HepG2 (cell line): ENCODE measurements at regions of chr18 and their contacts with region 1.

Region 1: GRCh38 chr18:6835345-6835744 is 105.8 kb downstream of the ARHGAP28 start:
- DNase-seq: peak; percentile 6
- ATAC-seq: no peak
- H3K4me3 ChIP-seq: no peak overlapping the region
- H3K27ac ChIP-seq: no peak overlapping the region
- H3K4me1 ChIP-seq: no peaks in the 10 kb centered on the region
- H3K27me3 ChIP-seq: no peaks in the 10 kb centered on the region; a peak in 1 of 5 replicates
- CTCF ChIP-seq: no peak
- EP300 ChIP-seq: no peak
- POLR2A ChIP-seq: no peak
- RAD21 ChIP-seq: no peak

Region 2: DNA sequence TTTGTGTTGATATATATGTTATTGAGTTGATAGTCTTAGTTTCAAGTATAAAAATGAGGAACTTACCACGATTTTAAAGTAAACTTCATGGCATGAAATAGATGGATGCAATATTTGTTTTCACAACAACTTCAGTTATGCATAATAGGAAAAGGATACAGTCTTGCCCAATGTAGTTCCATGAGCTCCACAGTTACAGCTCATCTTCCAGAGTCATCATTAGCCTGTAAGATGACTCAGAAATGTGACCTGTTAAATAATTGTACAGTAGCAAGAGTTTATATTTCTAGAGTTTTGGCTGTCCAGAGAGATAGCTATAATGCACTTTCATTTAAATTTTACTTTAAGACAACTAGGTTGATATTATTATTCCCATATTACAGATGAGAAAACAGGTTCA is 186.8 kb before region 1 on chr18:
- CTCF ChIA-PET with region 1: no interaction called
- POLR2A ChIA-PET with region 1: no interaction called
- in situ Hi-C with region 1: no loop called
- intact Hi-C with region 1: loop called (anchors 10 kb)
- DNase-seq: no peak
- ATAC-seq: no peak
- H3K4me3 ChIP-seq: no peak overlapping the region
- H3K27ac ChIP-seq: no peak overlapping the region
- H3K4me1 ChIP-seq: peaks cover 6% of the 10 kb centered on the region; the same call in 1 of the 2 replicates
- H3K27me3 ChIP-seq: peaks cover 1 to 8% of the 10 kb centered on the region in 2 experiments; a peak in 2 of 5 replicates
- CTCF ChIP-seq: no peak
- EP300 ChIP-seq: no peak
- POLR2A ChIP-seq: no peak
- RAD21 ChIP-seq: no peak